ENCODE measurements at regions of chr2 and their contacts with region 1.

Region 1: GRCh38 chr2:68594674-68595492 is 48.5 kb upstream of the PROKR1 start:
- DNase-seq: peak; percentile 56
- ATAC-seq: peak; percentile 74
- H3K4me3 ChIP-seq: no peak overlapping the region
- H3K27ac ChIP-seq: no peak overlapping the region
- H3K4me1 ChIP-seq: no peaks in the 10 kb centered on the region
- H3K27me3 ChIP-seq: peaks cover 2% of the 10 kb centered on the region; the same call in 1 of the 2 replicates
- CTCF ChIP-seq: peak; percentile 81
- POLR2A ChIP-seq: no peak
- RAD21 ChIP-seq: peak; percentile 56

Region 2: GRCh38 chr2:68579689-68580088 is 15.2 kb before region 1 on chr2:
- CTCF ChIA-PET with region 1: interaction called, 13 read pairs
- POLR2A ChIA-PET with region 1: no interaction called
- dilution Hi-C with region 1: no loop called
- in situ Hi-C with region 1: no loop called
- intact Hi-C with region 1: no loop called
- DNase-seq: no peak
- ATAC-seq: no peak
- H3K4me3 ChIP-seq: no peak overlapping the region
- H3K27ac ChIP-seq: no peak overlapping the region
- H3K4me1 ChIP-seq: no peaks in the 10 kb centered on the region
- H3K27me3 ChIP-seq: no peaks in the 10 kb centered on the region
- CTCF ChIP-seq: no peak
- POLR2A ChIP-seq: no peak
- RAD21 ChIP-seq: no peak

Region 3: DNA sequence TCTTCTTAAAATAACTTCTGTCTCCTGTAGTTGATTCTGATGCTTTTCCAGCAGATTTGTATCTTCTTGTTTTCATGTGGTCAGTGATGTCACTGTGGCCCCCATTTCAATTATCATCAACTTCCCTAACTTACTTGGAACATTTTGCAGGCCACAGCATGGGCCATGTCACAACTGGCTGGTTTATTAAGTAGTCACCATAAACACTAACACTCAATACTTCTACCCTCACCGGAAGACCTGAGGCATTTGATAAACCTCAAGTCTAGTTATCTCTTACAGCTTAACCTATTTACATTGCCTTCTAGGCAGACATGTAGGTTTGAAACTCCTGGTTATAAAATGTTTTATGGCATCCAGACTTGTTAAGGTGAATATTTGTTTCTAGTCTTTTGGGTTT is 11.1 kb after region 1 on chr2:
- CTCF ChIA-PET with region 1: interaction called, 8 read pairs
- POLR2A ChIA-PET with region 1: interaction called, 3 read pairs
- dilution Hi-C with region 1: no loop called
- in situ Hi-C with region 1: no loop called
- intact Hi-C with region 1: loop called (anchors 1 kb)
- DNase-seq: no peak
- ATAC-seq: no peak
- H3K4me3 ChIP-seq: no peak overlapping the region
- H3K27ac ChIP-seq: no peak overlapping the region
- H3K4me1 ChIP-seq: no peaks in the 10 kb centered on the region
- H3K27me3 ChIP-seq: peaks cover 3% of the 10 kb centered on the region
- CTCF ChIP-seq: no peak
- POLR2A ChIP-seq: no peak
- RAD21 ChIP-seq: no peak